ENCODE measurements at regions of chr7 and their contacts with region 1.

Region 1: GRCh38 chr7:91264046-91264923 is at the start of gene FZD1:
- DNase-seq: peak; percentile 96 to 97
- ATAC-seq: peak; percentile 93 to 98 (median 96)
- H3K4me3 ChIP-seq: peak within 1 kb of the TSS; percentile 73 to 93 (median 84)
- H3K27ac ChIP-seq: peak within 1 kb of the TSS; percentile 87 to 98 (median 96)
- H3K4me1 ChIP-seq: peaks cover 3 to 47% (median 28%) of the 10 kb centered on the region in 9 donors
- H3K27me3 ChIP-seq: peaks cover 0 to 26% (median 0%) of the 10 kb centered on the region in 7 donors
- CTCF ChIP-seq: peak in 2 of 9 donors; percentile 27 to 31
- total RNA-seq, gene FZD1: 4.1 to 36.0 (median 17.5) TPM

Region 2: DNA sequence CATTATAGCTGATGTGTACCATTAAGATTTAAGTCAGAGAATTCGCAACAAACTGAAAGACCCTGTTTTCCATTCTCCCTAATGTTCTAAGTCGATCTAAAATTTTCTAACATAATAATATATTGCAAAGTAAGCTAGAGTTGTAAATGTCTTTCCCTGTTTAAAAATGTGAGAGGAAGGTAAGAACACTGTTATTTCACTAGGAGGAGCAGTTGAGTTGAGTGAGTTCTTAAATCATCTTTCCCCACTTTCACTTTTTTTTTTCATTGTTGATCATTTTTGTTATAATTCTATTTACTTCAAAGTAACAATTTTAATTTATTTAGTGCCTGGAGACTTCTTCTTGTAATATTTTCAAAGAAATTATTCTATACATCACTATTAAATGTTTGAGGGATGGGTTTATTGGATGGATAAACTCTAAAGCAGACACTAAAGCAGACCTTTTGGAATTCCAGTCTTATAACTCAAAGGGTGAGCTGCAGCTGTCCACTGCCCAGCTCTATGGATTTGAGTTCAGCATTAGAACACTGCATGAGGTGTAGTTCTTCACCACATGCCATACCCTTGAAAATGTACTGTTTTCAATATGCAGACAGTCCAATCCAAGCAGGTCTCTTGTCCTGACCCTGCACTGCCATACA is 181.3 kb before region 1 on chr7:
- intact Hi-C with region 1: loop called in 8 of 10 experiments (anchors 2 to 10 kb)
- DNase-seq: no peak
- ATAC-seq: peak in 2 of 8 donors; percentile 45 to 60
- H3K4me3 ChIP-seq: no peak overlapping the region
- H3K27ac ChIP-seq: peak overlapping the region in 6 of 10 donors; percentile 43 to 68 (median 51)
- H3K4me1 ChIP-seq: peaks cover 3 to 42% (median 24%) of the 10 kb centered on the region in 9 donors
- H3K27me3 ChIP-seq: no peaks in the 10 kb centered on the region
- CTCF ChIP-seq: peak; percentile 27 to 72 (median 59)

Region 3: DNA sequence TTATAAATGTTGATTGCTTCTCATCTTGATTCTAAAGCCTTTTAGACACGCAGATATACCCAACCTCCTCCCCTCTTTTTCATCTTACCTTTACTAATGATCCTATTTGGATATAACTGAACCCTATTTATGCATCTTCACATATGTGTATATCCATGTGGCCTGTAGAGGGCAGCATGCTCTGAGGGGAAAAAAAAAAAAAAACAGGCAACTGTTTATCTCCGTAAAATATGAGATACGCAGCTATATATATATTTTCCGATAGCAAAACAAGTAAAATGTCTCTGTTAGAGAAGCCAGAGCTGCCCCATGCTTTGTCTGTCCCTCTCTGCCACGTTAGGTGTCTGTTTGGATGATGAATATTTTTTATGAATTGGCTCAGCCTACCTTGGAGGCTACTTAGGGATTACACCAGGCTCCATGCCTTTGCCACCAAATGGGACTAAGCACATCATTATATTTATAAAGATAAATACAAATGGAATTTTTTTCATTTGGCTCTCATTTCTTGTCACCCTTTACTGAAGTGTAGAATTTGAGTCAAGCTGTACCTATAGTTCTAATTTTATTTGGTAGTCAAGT is 174.8 kb before region 1 on chr7:
- intact Hi-C with region 1: loop called (anchors 2 to 10 kb)
- DNase-seq: no peak
- ATAC-seq: peak; percentile 28 to 73 (median 64)
- H3K4me3 ChIP-seq: peak overlapping the region in 7 of 10 donors; percentile 6 to 44 (median 36)
- H3K27ac ChIP-seq: peak overlapping the region in 4 of 10 donors; percentile 29 to 62 (median 40)
- H3K4me1 ChIP-seq: peaks cover 0 to 21% (median 9%) of the 10 kb centered on the region in 9 donors
- H3K27me3 ChIP-seq: no peaks in the 10 kb centered on the region
- CTCF ChIP-seq: peak; percentile 63 to 89 (median 82)

Region 4: DNA sequence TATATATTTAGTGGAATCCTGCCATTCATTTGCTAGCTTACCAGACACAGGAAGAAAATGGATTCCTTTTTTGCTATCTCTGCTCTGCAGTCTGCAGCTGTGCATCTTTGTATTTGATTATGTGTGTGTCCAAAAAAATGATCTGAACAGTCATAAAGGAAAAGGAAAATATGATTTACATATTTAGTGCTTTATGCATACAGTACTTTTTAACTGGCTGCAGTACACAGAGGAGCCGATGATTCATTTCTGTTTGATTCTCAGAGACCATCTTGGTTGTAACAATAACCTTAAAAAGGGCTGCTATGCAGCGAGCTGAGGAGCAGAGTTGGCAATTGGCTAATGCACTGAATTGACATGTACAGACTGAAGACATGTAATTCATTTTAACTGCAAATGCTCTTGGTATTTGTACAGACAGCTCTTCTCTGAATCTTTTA is 151.4 kb before region 1 on chr7:
- intact Hi-C with region 1: no loop called
- DNase-seq: no peak
- ATAC-seq: no peak
- H3K4me3 ChIP-seq: no peak overlapping the region
- H3K27ac ChIP-seq: no peak overlapping the region
- H3K4me1 ChIP-seq: peaks cover 0 to 8% (median 0%) of the 10 kb centered on the region in 9 donors
- H3K27me3 ChIP-seq: no peaks in the 10 kb centered on the region
- CTCF ChIP-seq: no peak

Region 5: DNA sequence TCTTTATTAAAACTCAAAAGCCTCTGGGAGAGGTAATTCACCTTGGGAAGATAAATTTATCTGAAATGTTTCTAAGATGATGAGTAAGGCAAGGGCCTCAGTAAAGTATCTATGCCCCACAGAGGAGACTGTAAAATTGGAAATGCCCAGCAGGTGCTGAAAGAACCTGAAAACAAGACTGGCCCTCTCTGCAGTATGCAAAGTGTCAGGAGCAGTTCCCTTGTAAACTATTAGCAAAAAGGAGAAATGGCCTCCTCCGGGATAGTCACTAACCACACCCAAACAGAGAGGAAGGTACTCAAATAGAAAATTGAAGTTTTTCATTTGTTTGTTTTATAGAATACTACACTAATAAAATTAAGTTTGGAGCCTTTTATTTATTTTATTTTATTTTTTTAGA is 81.2 kb after region 1 on chr7:
- intact Hi-C with region 1: loop called in 1 of 10 experiments (anchors 10 kb)
- DNase-seq: no peak
- ATAC-seq: no peak
- H3K4me3 ChIP-seq: no peak overlapping the region
- H3K27ac ChIP-seq: no peak overlapping the region
- H3K4me1 ChIP-seq: peaks cover 0 to 63% (median 50%) of the 10 kb centered on the region in 9 donors
- H3K27me3 ChIP-seq: no peaks in the 10 kb centered on the region
- CTCF ChIP-seq: no peak

Region 6: GRCh38 chr7:91771921-91772815 is 507.9 kb after region 1 on chr7:
- intact Hi-C with region 1: loop called in 1 of 10 experiments (anchors 10 kb)
- DNase-seq: no peak
- ATAC-seq: peak in 6 of 8 donors; percentile 42 to 89 (median 66)
- H3K4me3 ChIP-seq: no peak overlapping the region
- H3K27ac ChIP-seq: peak overlapping the region in 5 of 10 donors; percentile 23 to 34 (median 31)
- H3K4me1 ChIP-seq: peaks cover 0 to 16% (median 5%) of the 10 kb centered on the region in 9 donors
- H3K27me3 ChIP-seq: no peaks in the 10 kb centered on the region
- CTCF ChIP-seq: no peak

Region 7: DNA sequence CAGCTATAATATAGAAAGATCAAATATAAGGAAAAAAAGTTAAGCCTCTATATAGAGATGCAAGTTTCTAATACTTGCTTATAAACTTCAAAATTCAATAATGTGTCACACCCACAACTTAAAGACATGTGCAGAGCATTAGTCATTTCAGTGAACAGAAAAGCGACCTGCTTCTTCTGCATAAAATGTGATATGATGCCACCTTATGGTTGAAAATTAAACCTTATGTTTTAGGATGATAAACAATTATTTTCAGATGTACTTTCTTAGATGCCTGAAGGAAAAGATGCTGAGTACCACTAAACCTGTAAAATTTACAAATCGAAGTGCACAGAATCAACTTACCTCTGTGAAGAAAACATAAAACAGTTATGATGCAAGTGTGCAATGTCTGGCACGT is 520.2 kb after region 1 on chr7:
- intact Hi-C with region 1: loop called in 3 of 10 experiments (anchors 10 kb)
- DNase-seq: no peak
- ATAC-seq: peak in 3 of 8 donors; percentile 42 to 61 (median 46)
- H3K4me3 ChIP-seq: no peak overlapping the region
- H3K27ac ChIP-seq: no peak overlapping the region
- H3K4me1 ChIP-seq: no peaks in the 10 kb centered on the region
- H3K27me3 ChIP-seq: no peaks in the 10 kb centered on the region
- CTCF ChIP-seq: peak in 7 of 9 donors; percentile 25 to 63 (median 57)

Measured in heart right ventricle (tissue), 16 donors.